CD4-positive, alpha-beta memory T cell (primary cell): ENCODE measurements at regions of chr3 and their contacts with region 1.

Region 1: DNA sequence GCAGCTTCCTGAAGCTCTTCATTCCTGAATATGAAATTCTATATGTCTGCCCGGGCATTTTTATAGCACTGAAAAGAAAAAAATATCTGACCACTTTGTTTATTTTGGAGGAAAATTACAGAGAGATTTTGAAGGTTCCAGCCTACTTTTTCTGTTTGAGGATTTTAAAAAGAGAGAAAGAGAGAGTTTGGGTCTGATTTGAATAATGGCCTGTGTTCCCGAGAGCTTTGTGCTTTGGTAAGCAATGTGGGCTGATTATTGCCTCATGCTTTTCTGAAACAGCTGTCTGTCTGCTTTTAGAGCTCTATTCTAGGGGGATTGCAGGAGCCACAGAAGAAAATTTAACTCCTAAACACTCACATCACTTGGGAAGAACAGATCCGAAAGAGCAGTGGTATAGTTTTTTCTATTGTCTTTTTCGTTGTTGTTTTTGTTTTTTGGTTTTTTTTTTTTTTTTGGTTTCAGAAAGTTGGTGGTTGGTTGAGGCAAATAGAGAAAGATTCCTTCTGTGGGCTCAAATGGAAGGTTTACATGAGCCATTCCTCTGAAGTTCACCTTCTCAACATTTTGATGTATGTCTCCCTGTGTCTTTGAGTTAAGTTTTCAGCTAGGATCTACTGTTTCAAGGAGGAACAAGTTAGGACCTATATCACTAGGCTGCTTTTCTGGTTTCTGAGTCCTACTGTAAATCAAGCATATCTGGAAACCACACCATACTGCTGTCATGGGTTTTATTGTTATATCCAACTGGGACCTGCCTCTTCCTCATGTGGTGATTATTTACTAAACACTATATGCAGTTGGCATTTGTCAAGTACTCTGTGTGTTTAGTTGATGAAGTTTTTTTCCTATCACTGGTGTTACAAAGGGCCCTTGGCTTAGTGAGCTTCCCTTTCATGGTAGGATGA is 178.9 kb downstream of the KCNMB2 start:
- DNase-seq: no peak
- H3K4me3 ChIP-seq: no peak overlapping the region
- H3K4me3 Mint-ChIP-seq: no peak overlapping the region
- H3K27ac ChIP-seq: no peak overlapping the region
- H3K27ac Mint-ChIP-seq: no peak overlapping the region
- H3K4me1 ChIP-seq: no peaks in the 10 kb centered on the region
- H3K4me1 Mint-ChIP-seq: no peaks in the 10 kb centered on the region
- H3K27me3 ChIP-seq: no peaks in the 10 kb centered on the region
- H3K27me3 Mint-ChIP-seq: peaks cover 0 to 4% of the 10 kb centered on the region in 2 donors

Region 2: GRCh38 chr3:178684881-178685590 is 30.1 kb before region 1 on chr3:
- CTCF ChIA-PET with region 1: no interaction called
- POLR2A ChIA-PET with region 1: no interaction called
- intact Hi-C with region 1: loop called (anchors 1 kb)
- DNase-seq: no peak
- H3K4me3 ChIP-seq: no peak overlapping the region
- H3K4me3 Mint-ChIP-seq: no peak overlapping the region
- H3K27ac ChIP-seq: no peak overlapping the region
- H3K27ac Mint-ChIP-seq: no peak overlapping the region
- H3K4me1 ChIP-seq: no peaks in the 10 kb centered on the region
- H3K4me1 Mint-ChIP-seq: no peaks in the 10 kb centered on the region
- H3K27me3 ChIP-seq: no peaks in the 10 kb centered on the region
- H3K27me3 Mint-ChIP-seq: no peaks in the 10 kb centered on the region